ENCODE measurements at regions of chr16 and their contacts with region 1.

Region 1: DNA sequence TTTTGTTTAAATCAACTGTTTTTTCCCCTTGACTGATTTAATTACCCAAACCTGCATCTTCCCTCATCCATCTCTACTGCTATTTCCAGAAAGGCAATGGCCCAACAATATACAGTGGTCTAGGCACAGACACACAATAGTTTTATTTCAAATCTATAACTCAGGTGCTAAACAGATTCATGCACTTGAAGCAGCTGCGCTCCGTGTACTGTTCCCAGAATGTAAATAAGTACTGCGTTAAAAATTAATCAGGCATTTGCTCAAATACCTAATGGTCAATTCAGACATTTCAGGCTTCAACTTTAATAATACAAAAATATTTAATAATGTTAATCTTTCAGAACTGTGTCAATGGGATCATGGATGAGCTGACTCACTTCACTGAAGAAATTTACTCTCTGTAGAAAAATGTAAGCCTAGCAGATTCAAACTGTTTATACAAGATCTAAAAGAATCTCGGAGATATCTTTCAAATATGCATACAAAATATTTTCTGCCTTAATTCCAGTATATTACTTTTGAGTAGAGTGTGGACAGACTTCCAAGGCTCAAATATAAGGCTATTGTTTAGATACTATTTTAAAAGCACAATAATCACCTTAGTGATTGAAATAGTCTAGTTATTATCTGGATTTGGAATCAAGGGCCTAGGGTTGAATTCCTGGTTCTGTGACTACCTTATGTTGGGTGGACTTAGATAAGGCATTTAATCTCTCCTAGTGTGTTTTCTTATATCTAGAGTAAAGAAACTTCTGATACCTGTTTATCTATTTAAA is 97.4 kb upstream of the PSMD7 start:
- DNase-seq: no peak
- ATAC-seq: no peak
- H3K4me3 ChIP-seq: no peak overlapping the region
- H3K27ac ChIP-seq: no peak overlapping the region
- H3K4me1 ChIP-seq: no peaks in the 10 kb centered on the region
- H3K27me3 ChIP-seq: no peaks in the 10 kb centered on the region

Region 2: DNA sequence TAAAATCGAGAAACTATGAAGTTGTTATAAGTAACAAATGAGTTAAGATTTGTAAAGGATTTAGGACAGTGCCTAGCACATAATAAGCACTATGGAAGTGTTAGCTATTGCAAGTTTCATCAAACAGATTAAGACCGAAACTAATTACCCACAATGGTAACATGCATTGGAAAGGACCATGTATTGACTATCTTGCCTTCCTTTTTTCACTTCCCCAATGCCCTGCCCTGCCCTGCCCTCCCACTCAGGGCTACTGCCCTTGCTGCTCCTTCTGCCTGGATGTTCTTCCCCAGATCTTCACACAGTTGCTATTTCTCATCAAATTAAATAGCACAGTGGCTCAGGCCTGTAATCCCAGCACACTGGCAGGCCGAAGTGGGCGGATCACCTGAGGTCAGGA is 104.7 kb before region 1 on chr16:
- intact Hi-C with region 1: loop called in 1 of 2 experiments (anchors 10 kb)
- DNase-seq: no peak
- ATAC-seq: no peak
- H3K4me3 ChIP-seq: no peak overlapping the region
- H3K27ac ChIP-seq: no peak overlapping the region
- H3K4me1 ChIP-seq: no peaks in the 10 kb centered on the region
- H3K27me3 ChIP-seq: peaks cover 0 to 2% of the 10 kb centered on the region in 2 donors